Activated CD8-positive, alpha-beta T cell treated with anti-CD3 and anti-CD28 coated beads, Interleukin-2, amount 10 ng/mL, durations not matched to agents 7 days and 5 days (primary cell): ENCODE measurements at regions of chr13 and their contacts with region 1.

Region 1: DNA sequence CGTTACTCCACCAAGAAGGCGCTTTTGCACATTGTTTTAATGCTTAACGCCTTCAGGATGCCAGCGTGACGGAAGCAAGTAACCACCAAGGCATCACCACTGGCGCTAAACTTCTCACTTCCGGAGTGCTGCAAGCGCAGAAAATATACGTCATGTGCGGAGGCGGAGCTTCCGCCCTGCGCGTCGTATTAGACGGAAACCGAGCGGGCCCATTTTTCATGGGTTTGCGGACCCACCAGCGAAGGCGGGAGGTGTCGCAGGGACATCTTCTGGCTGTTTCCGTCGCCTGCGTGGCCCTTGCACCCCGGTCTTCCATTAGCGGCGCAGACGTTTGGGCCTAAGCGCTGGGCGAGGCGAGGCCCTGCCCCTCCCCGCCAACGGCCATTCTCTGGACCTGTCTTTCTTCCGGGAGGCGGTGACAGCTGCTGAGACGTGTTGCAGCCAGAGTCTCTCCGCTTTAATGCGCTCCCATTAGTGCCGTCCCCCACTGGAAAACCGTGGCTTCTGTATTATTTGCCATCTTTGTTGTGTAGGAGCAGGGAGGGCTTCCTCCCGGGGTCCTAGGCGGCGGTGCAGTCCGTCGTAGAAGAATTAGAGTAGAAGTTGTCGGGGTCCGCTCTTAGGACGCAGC is at the start of gene ERCC5:
- DNase-seq: peak; percentile 97
- ATAC-seq: peak; percentile 85
- H3K4me3 Mint-ChIP-seq: peak within 1 kb of the TSS; percentile 87
- H3K27ac Mint-ChIP-seq: peak within 1 kb of the TSS; percentile 93
- H3K4me1 Mint-ChIP-seq: peaks cover 37% of the 10 kb centered on the region
- H3K27me3 Mint-ChIP-seq: no peaks in the 10 kb centered on the region
- total RNA-seq, gene ERCC5: 66.8 to 68.0 TPM

Region 2: GRCh38 chr13:102580552-102581169 is 265.1 kb before region 1 on chr13:
- CTCF ChIA-PET with region 1: interaction called, 13 read pairs
- POLR2A ChIA-PET with region 1: interaction called, 6 read pairs
- DNase-seq: peak; percentile 66
- ATAC-seq: peak; percentile 81
- H3K4me3 Mint-ChIP-seq: no peak overlapping the region
- H3K27ac Mint-ChIP-seq: no peak overlapping the region
- H3K4me1 Mint-ChIP-seq: peaks cover 21% of the 10 kb centered on the region
- H3K27me3 Mint-ChIP-seq: peaks cover 8% of the 10 kb centered on the region

Region 3: DNA sequence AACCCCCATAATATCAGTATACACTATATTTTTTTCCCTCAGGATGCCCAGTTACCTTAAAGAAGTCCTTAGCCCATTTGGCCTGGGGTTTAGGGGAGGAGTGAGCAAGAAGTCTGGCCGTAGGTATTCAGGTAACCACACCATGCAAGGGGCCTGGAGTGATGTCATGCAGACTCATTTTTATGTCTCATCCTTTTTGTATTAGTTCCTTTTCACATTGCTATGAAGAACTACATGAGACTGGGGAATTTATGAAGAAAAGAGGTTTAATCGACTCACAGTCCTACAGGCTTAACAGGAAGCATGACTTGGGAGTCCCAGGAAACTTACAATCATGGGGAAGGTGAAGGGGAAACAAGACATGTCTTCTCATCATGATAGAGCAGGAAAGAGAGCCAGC is 236.8 kb before region 1 on chr13:
- CTCF ChIA-PET with region 1: interaction called, 4 read pairs
- POLR2A ChIA-PET with region 1: interaction called, 11 read pairs
- DNase-seq: no peak
- ATAC-seq: no peak
- H3K4me3 Mint-ChIP-seq: no peak overlapping the region
- H3K27ac Mint-ChIP-seq: peak overlapping the region; percentile 86
- H3K4me1 Mint-ChIP-seq: peaks cover 62% of the 10 kb centered on the region
- H3K27me3 Mint-ChIP-seq: no peaks in the 10 kb centered on the region

Region 4: DNA sequence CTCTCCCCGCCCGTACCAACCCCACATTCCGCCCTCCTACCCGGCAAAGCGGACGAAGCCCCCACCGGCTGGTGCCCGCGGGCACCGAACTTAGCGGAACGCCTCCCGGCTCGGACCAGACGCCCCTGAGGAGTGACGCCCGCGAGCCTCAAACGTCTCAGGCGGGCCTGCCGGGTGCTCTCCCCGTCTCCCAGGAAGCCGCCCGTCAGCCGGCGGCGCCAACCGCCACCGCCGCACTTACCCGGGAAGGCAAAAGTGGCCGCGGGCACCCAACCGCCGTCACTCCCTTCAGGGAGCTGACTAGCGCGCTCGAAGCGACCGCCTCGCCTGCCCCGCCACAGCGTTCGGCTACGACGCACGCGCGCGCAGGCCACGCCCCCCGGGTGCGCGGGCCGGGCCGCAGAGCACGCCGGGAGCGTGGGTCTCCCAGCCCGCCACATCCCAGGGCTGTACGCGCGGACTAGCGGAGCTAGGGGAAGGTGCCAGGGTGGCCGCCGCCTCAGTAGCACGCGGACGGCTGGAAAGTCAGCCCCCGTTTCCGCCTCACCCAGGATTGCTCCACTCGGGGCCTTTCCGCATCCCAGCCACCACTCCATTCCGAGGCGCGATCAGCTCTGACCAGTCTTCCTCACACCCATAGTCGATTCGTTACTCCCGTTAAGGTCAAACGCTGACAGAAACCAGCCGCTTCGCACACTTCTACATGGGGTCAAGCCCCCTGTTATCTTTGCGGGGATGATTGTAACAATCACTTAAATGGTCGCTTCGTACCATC is 72.1 kb before region 1 on chr13 and contains the start of gene TEX30:
- CTCF ChIA-PET with region 1: interaction called, 3 read pairs
- POLR2A ChIA-PET with region 1: interaction called, 44 read pairs
- DNase-seq: peak; percentile 89
- ATAC-seq: peak; percentile 96
- H3K4me3 Mint-ChIP-seq: peak within 1 kb of the TSS; percentile 84
- H3K27ac Mint-ChIP-seq: peak within 1 kb of the TSS; percentile 92
- H3K4me1 Mint-ChIP-seq: peaks cover 63% of the 10 kb centered on the region
- H3K27me3 Mint-ChIP-seq: no peaks in the 10 kb centered on the region
- total RNA-seq, gene TEX30: 40.1 to 43.3 TPM

Region 5: DNA sequence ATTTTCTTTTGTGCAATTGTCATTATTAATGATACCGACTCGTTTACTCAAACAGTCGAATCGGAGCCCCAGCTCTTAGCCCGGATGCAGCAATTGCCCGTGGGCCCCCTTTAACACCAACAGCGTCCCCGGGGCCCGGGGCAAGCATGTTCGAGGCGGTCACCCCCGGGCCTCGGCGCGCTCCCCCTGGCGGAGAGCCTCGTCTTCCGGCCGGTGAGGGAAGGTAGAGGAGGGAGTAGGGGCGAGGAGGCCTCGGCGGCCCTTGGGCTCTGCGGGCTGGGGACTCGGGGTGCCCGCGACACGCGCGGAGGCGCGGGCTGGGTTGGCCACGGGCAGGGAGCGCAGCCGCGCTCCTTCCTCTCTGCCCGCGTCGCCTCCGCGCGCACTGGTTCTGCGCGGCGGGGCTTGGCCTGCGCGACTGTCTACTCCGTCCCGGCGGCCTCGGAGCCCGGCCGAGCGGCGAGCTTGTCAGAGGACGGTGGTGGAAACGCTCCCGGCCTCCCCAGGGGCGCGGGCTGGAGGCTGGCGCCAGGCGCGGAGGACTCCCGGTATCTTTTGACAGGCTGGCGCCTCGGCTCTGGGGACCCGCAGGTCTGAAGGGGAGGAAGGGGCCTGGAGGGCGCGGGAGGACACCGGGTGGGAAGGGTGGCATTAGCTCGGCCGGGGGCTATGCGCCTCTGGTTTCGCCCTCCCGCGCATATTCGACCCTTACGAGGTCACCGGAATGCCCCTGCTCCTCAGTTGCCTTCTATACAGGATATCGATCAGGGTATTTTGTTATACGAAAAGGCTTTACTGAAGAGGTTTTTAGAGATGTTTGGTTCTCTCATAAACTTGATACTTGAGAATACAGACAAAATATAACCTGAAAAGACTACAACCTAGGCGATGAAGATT is 45.4 kb before region 1 on chr13:
- CTCF ChIA-PET with region 1: interaction called, 11 read pairs
- POLR2A ChIA-PET with region 1: interaction called, 24 read pairs
- DNase-seq: peak; percentile 90
- ATAC-seq: peak; percentile 79
- H3K4me3 Mint-ChIP-seq: peak overlapping the region; percentile 87
- H3K27ac Mint-ChIP-seq: peak overlapping the region; percentile 87
- H3K4me1 Mint-ChIP-seq: peaks cover 40% of the 10 kb centered on the region
- H3K27me3 Mint-ChIP-seq: no peaks in the 10 kb centered on the region

Region 6: GRCh38 chr13:102870677-102871415 is 25.1 kb after region 1 on chr13:
- CTCF ChIA-PET with region 1: interaction called, 12 read pairs
- POLR2A ChIA-PET with region 1: no interaction called
- DNase-seq: peak; percentile 65
- ATAC-seq: peak; percentile 82
- H3K4me3 Mint-ChIP-seq: no peak overlapping the region
- H3K27ac Mint-ChIP-seq: no peak overlapping the region
- H3K4me1 Mint-ChIP-seq: peaks cover 23% of the 10 kb centered on the region
- H3K27me3 Mint-ChIP-seq: no peaks in the 10 kb centered on the region

Region 7: GRCh38 chr13:102913914-102914313 is 68.2 kb after region 1 on chr13:
- CTCF ChIA-PET with region 1: no interaction called
- POLR2A ChIA-PET with region 1: no interaction called
- DNase-seq: no peak
- ATAC-seq: no peak
- H3K4me3 Mint-ChIP-seq: no peak overlapping the region
- H3K27ac Mint-ChIP-seq: no peak overlapping the region
- H3K4me1 Mint-ChIP-seq: no peaks in the 10 kb centered on the region
- H3K27me3 Mint-ChIP-seq: peaks cover 16% of the 10 kb centered on the region

Region 8: GRCh38 chr13:102999499-102999898 is 153.8 kb after region 1 on chr13:
- CTCF ChIA-PET with region 1: no interaction called
- POLR2A ChIA-PET with region 1: no interaction called
- DNase-seq: no peak
- ATAC-seq: no peak
- H3K4me3 Mint-ChIP-seq: no peak overlapping the region
- H3K27ac Mint-ChIP-seq: no peak overlapping the region
- H3K4me1 Mint-ChIP-seq: no peaks in the 10 kb centered on the region
- H3K27me3 Mint-ChIP-seq: peaks cover 3% of the 10 kb centered on the region

Region 9: DNA sequence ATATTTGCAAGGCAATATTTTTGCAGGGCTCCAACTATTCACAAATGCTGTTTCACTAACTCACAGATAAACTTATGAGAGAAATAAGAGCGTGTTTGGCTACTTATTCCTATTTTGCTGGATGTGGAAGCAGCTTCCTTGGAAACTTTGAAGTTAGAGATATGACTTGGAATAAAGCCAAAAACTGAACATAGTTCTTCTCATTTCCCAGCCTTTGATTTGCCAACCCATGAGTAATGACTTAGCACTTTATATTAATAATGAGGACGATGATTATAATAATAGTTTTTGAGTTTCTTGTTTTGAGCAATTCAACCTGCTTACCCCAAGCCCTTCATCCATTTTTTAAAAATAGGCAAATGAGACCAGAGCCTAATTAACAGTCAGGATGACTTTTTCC is 172.8 kb after region 1 on chr13:
- CTCF ChIA-PET with region 1: no interaction called
- POLR2A ChIA-PET with region 1: no interaction called
- DNase-seq: no peak
- ATAC-seq: no peak
- H3K4me3 Mint-ChIP-seq: no peak overlapping the region
- H3K27ac Mint-ChIP-seq: no peak overlapping the region
- H3K4me1 Mint-ChIP-seq: no peaks in the 10 kb centered on the region
- H3K27me3 Mint-ChIP-seq: no peaks in the 10 kb centered on the region